ENCODE measurements at regions of chr17 and their contacts with region 1.

Region 1: DNA sequence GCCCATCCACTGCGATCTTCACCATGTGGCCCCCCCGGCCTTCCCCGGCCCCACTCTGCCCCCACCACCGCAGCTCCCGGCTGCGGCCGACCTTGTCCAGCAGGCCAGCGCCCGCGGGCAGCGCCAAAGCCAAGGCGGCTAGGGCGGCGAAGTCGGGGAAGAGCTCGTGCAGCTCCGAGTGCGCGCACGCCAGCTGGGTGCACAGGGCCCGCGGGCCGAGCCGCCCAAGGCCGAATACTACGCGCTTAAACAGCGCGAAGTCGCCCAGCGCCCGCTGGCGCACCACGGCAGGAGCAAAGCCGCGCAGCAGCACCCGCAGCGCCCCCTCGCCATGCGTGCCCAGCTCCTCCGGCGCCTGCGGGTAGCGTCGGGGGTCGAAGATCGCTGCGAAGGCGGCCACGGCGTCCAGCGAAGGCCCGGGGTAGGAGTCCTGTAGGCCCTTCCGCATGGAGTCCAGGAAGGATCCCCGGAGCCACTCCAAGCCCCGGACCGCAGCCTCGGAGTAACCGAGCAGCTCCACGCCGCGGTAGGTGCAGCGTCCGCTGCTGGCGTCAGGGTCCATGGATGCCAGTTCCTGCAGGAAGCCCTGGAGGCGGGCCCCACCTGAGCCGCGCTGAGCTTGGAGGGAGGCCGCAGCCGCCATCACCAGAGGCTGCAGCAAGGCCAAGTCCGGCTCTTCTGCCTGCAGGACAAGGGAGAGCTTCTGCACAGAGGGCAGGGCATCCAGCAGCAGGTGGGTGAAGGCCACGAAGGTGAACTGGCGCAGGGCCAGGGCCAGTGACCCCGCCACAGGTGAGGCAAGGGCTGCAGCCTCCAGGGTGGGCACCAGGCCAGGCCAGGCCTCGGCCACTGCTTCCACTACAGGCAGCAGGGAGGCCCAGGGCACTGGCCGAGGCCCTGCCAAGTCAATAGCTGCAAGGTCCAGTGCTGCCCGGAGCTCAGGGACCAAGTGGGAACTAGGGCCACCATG is 10.3 kb downstream of the C17orf113 start:
- DNase-seq: no peak
- ATAC-seq: peak; percentile 45

Region 2: GRCh38 chr17:41593311-41593981 is 446.6 kb before region 1 on chr17:
- intact Hi-C with region 1: no loop called
- DNase-seq: no peak
- ATAC-seq: no peak

Region 3: GRCh38 chr17:41959336-41960095 is 80.6 kb before region 1 on chr17:
- intact Hi-C with region 1: loop called in 1 of 2 experiments (anchors 10 kb)
- DNase-seq: no peak
- ATAC-seq: no peak

Region 4: DNA sequence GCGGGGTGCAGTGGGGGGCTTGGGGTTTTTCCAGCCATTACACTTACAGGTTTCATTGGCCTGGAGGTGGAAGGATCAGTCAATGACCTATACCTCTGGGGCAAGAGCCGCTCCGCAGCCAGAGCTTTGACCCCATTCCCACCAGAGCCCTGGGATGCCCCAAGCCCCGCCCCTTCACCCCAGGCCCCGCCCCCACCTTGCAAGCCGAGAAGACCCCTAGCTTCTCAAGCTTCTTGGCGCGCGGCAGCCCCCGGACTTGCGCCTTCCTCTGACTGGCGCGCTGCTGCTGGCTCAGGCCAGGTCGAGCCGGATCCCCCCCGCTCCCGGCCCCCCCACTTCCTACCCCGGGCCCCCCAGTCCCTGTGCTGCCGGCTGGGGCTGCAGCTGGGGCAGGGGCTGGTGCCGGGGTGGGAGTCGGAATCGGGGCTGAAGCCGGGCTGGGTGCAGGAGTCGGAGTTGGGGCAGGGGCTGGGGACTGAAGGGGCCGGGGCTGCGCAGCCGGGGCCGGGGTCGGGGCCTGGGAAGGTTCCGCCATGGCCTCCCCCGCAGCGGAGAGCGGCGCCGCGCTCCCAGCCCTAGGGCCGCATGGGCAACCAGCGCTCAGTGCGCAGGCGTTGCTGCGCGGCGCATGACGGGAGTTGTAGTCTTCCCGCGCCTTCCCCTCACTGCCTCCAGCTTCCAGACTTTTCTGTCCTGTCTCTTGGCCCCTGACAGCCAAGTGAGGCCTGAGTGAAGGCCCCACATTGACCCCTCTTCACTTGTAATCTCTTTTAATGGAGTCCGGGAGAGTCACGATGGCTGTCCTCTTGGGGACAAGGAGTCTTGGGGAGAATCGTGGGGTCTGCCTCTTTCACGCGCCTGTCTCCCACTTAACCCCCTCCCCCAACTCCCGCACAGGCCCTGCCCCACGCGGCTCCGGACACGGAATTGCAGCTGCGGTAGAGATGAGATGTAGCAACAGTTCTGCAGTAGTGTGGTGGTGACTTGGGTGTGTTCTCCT is 81.0 kb after region 1 on chr17 and contains the start of gene KAT2A:
- intact Hi-C with region 1: no loop called
- DNase-seq: peak; percentile 77 to 88
- ATAC-seq: peak; percentile 78
- total RNA-seq, gene KAT2A: 23.6 TPM

Region 5: DNA sequence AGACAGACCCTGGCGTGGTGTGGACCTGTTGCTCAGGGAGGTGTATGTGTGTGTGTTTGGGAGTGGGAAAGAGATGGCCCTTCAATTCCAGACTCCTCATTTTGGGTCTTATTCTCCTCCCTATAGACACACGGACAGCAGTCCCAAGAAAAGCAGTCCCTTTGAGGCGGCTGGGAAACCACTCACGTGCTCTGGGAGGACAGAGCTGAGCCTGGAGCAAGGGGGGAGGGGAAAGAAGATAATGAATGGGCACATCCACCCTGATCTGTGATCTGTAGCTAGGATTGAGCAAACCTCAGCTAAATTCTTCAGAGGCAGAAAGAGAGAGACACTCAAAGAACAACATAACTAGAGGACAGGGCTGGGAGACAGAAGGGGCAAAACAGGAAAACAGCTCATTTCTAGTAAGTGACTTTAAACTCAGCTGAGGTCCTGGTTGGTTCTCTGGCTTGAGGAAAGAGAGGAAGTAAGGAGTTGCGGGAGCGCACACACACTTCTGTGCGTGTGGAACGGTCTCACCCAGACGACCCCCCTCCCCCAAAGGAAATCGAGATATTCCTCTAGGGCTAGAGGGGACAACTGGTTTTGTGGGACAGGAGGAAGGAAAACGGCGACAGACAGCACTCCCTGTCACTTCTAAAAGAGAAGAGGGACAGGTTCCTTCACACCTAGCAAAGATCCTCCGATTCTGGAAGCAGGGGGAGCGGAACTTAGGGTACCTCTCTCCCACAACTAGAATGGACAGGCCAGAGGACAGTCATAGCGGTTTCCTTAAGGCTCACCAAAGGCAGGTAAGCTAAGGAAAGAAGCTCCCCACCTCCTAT is 114.1 kb after region 1 on chr17:
- intact Hi-C with region 1: no loop called
- DNase-seq: no peak
- ATAC-seq: peak; percentile 27

Measured in left colon (tissue), 2 donors.